ENCODE measurements at regions of chr7 and their contacts with region 1.

Region 1: GRCh38 chr7:26376175-26376917 is 84.7 kb downstream of the SNX10 start:
- DNase-seq: no peak
- H3K4me3 ChIP-seq: peak overlapping the region; percentile 9
- H3K27ac ChIP-seq: no peak overlapping the region
- H3K27me3 ChIP-seq: peaks cover 56% of the 10 kb centered on the region
- CTCF ChIP-seq: no peak

Region 2: GRCh38 chr7:26187380-26188205 is 188.8 kb before region 1 on chr7:
- in situ Hi-C with region 1: no loop called
- DNase-seq: no peak
- H3K4me3 ChIP-seq: no peak overlapping the region
- H3K27ac ChIP-seq: no peak overlapping the region
- H3K27me3 ChIP-seq: no peaks in the 10 kb centered on the region
- CTCF ChIP-seq: no peak

Region 3: GRCh38 chr7:27160546-27161213 is 784.3 kb after region 1 on chr7:
- in situ Hi-C with region 1: loop called (anchors 10 kb)
- DNase-seq: peak; percentile 40
- H3K4me3 ChIP-seq: peak overlapping the region; percentile 34
- H3K27ac ChIP-seq: no peak overlapping the region
- H3K27me3 ChIP-seq: peaks cover 96% of the 10 kb centered on the region
- CTCF ChIP-seq: peak; percentile 99

Measured in brain microvascular endothelial cell (primary cell).